ENCODE measurements at regions of chr1 and their contacts with region 1.

Region 1: DNA sequence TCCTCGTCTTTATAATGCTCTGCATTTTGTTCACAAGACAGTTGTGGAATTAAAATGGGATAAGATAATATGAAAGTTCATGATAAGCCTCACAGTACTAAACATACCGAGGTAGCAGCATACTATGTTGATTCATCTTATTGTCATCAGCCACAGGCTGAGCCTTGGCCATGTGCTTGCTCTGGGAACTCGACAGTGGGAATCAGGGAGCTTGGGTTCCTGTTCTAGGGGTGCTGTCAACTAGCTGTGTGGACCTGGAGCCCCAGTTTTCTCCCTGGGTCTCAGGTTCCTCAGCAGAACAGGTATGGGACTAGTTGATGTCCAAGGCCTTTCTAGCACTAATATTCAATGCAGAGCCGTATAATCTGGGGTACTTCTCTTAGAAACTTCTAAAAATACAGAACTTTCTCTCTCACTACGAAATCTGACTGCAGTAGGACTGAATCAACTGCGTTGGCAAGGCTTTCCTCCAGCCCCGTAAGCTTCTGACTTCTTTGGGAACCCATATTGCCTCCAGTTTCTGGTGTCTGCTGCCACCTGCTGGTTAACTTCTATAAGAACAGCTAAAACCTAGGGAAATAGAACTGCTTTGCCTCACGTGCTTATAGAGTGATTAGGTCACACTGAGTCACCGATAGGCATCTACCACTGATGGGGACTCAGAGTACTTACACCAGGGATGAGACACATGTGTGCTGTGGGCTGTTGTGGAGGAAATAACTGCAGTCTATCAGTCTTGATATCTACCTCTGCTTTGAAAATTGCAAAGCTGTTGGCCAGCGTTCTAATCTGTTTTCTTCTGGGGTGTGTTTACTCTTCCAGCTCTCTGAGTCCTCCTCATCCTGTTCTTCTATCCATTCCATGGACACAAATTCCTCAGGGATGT is 110.9 kb downstream of the RGL1 start:
- DNase-seq: peak in 3 of 4 donors; percentile 73 to 91 (median 81)
- ATAC-seq: peak; percentile 92
- H3K4me3 ChIP-seq: no peak overlapping the region
- H3K27ac ChIP-seq: peak overlapping the region; percentile 22 to 66
- H3K4me1 ChIP-seq: peaks cover 9 to 47% of the 10 kb centered on the region in 2 donors
- H3K27me3 ChIP-seq: no peaks in the 10 kb centered on the region
- CTCF ChIP-seq: peak; percentile 79 to 85

Region 2: DNA sequence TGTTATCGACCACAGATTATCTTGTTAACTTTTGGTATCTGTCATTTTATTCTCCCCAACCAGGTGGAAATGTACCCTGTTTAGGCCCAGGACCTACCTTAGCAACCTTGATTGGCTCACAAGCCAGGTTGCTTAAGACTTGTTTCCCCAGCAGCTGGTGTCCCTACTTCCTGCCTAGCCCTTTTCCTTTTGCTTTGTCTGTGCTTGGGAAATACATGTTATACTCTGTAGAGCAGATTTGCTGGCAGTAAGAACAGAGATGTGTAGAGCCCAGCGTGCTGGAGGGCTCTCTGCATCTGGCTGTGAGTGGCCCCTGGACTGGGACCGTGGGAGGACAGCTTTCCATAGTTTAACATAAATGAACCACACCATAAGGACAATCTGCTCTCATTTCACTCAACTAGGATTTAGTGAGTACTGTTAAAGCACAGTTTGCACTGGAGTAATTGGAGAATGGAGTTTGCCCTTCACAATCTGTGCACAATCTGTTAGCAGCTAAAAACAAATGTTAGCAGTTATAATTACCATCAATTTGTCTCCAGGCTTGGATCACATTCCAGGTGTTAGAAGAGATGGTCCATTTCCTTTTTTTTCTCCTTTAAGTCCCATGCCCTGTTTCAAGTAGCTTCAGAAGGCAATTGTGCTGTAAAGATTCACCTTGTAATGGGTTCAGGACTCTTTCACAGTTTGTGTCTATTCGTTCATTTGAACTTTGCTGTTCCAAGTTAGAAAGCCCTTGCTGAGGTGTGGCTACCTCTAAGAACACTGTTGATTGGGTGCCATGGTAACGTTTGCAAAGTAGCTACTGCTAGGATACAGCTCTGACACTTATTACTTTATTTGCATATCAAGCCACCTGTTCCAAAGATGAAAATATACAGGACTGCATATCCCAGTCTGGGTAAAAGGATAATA is 263.1 kb before region 1 on chr1 and contains the start of gene APOBEC4:
- intact Hi-C with region 1: loop called in 1 of 2 experiments (anchors 5 kb)
- DNase-seq: no peak
- ATAC-seq: peak; percentile 93
- H3K4me3 ChIP-seq: no peak within 1 kb of the TSS
- H3K27ac ChIP-seq: peak within 1 kb of the TSS in 1 of 2 donors; percentile 64
- H3K4me1 ChIP-seq: peaks cover 4 to 31% of the 10 kb centered on the region in 2 donors
- H3K27me3 ChIP-seq: no peaks in the 10 kb centered on the region
- CTCF ChIP-seq: no peak
- polyA plus RNA-seq, gene APOBEC4: 0.49 to 2.2 (median 1.1) TPM

Region 3: GRCh38 chr1:184036517-184036949 is 120.7 kb after region 1 on chr1:
- intact Hi-C with region 1: no loop called
- DNase-seq: peak in 2 of 4 donors; percentile 23 to 76
- ATAC-seq: peak; percentile 58
- H3K4me3 ChIP-seq: peak overlapping the region; percentile 30 to 53
- H3K27ac ChIP-seq: no peak overlapping the region
- H3K4me1 ChIP-seq: peaks cover 0 to 20% of the 10 kb centered on the region in 2 donors
- H3K27me3 ChIP-seq: peaks cover 13 to 44% of the 10 kb centered on the region in 2 donors
- CTCF ChIP-seq: no peak

Region 4: DNA sequence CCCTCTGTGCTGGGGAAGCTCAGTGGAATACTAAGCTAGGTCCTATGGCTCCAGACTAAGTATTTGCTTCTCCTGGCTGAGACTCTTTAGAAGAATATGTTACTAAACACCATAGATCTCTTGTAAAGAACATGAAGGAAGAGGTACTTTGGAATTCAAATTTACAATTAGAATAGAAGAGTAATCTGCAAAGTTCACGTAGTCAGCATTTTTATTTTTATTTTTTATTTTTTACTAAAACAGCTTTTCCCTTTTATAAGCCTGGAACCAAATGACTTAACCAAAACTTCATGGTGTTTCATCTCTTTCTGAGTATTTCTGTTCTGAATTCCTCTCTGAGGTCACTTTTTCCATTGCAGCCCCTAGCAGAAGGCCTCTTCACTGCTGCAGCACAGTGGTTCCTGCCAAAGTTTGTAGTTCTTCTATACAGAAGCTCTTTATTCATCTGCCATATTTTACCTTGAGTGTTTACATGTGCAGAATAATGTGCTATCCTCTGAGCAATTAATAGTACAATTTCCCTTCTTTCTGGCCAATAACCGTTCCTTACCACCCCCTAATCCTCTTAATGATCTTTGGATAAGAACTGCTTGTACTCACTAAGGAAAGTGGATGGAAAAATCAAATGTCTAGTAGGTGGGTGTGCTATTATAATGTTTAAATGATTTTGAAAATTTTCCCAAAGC is 162.8 kb after region 1 on chr1:
- intact Hi-C with region 1: no loop called
- DNase-seq: peak in 1 of 4 donors; percentile 57
- ATAC-seq: peak; percentile 20
- H3K4me3 ChIP-seq: no peak overlapping the region
- H3K27ac ChIP-seq: peak overlapping the region in 1 of 2 donors; percentile 27
- H3K4me1 ChIP-seq: peaks cover 0 to 7% of the 10 kb centered on the region in 2 donors
- H3K27me3 ChIP-seq: no peaks in the 10 kb centered on the region
- CTCF ChIP-seq: no peak